Activated T-helper 2 cell treated with anti-CD3 and anti-CD28 coated beads, Interferon-gamma antibody, Interleukin-2, Interleukin-4, amounts not matched to agents 10 μg/mL and 5 μg/mL and 100 μg/mL, durations not matched to agents 14 hours and 24 hours and 36 hours (primary cell): ENCODE measurements at regions of chr9 and their contacts with region 1.

Region 1: GRCh38 chr9:6703898-6704639 is 53.7 kb upstream of the KDM4C start:
- DNase-seq: peak; percentile 82
- H3K4me3 Mint-ChIP-seq: peak overlapping the region; percentile 91
- H3K27ac Mint-ChIP-seq: peak overlapping the region; percentile 91
- H3K4me1 Mint-ChIP-seq: peaks cover 20% of the 10 kb centered on the region
- H3K27me3 Mint-ChIP-seq: peaks cover 2% of the 10 kb centered on the region

Region 2: DNA sequence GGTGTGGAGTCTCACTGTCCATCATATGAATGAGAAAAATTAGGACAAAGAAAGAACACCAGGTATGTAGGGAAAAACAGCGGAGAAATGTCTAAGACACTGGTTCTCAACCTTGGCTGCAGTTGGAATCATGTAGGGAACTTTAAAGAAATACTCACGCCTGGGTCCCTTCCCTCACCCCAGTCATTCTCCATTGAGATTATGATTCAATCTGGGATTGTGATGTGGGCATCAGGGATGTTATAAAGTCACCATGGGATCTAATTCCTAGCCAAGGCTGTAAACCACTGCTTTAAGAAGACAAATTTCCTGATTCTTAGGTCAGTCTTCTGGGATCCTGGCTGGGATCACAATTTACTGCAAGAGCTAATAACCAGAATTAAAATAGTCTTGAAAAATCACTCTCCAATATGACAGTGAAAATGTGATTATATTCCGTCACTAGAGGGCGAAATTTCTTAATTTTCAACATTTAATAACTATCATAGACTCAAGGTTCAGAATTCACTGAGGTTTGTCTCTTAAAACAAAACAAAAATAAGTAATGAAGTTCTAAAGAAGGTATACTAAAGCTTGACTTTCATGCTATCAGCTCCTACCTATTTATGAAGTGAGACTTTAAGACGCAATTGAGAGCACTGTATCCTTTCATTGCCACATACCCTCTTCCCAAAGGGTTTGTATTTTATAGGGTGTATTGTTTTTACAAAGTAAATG is 119.0 kb before region 1 on chr9:
- intact Hi-C with region 1: no loop called
- DNase-seq: no peak
- H3K4me3 Mint-ChIP-seq: no peak overlapping the region
- H3K27ac Mint-ChIP-seq: no peak overlapping the region
- H3K4me1 Mint-ChIP-seq: no peaks in the 10 kb centered on the region
- H3K27me3 Mint-ChIP-seq: peaks cover under 1% of the 10 kb centered on the region

Region 3: GRCh38 chr9:6715755-6716643 is 11.9 kb after region 1 on chr9:
- intact Hi-C with region 1: loop called (anchors 1 kb)
- DNase-seq: peak; percentile 58
- H3K4me3 Mint-ChIP-seq: peak overlapping the region; percentile 83
- H3K27ac Mint-ChIP-seq: peak overlapping the region; percentile 91
- H3K4me1 Mint-ChIP-seq: peaks cover 6% of the 10 kb centered on the region
- H3K27me3 Mint-ChIP-seq: no peaks in the 10 kb centered on the region

Region 4: GRCh38 chr9:6864102-6864501 is 160.0 kb after region 1 on chr9:
- intact Hi-C with region 1: no loop called
- DNase-seq: no peak
- H3K4me3 Mint-ChIP-seq: no peak overlapping the region
- H3K27ac Mint-ChIP-seq: no peak overlapping the region
- H3K4me1 Mint-ChIP-seq: peaks cover 8% of the 10 kb centered on the region
- H3K27me3 Mint-ChIP-seq: no peaks in the 10 kb centered on the region